ENCODE measurements at regions of chr1 and their contacts with region 1.

Region 1: DNA sequence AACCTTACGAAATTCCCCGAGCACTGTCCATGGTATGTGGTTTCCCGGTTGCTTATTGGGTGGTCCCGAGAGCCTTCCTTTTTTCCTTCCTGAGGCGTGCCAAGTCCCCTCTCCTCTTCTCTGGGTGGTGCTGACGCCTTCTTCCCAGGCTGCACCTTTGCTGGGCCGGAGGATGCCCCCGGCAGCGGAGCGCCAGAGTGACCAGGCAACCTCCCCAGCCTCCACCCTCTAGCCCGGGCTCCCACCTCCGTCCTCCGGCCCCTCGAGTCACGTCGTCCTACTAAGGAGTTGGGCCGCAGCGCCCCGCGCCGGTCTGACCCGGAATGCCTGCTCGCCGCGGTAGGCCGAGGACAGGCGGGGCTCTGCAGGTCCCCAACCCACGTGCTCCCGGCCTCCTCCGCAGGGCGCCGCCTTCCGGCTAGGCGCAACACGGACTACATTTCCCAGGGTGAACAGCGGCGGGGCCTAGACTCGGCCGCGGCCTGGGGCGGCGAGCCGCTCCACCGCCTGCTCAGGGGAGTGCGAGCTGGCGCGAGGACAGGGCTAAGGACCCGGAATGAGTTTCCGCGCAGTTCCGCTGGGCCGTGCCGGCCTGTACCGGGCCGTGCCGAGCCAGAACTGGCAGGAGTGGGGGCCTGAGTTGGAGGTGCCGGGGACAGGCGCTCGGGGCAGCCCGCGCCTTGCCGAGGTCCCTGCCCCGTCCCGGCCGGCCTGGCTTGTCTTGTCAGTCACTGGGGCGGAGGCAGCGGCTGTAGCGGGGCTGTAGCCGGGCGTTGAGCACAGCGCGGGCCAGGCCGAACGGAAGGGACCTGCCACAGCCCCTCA is at the start of gene IPO13:
- DNase-seq: peak; percentile 90 to 96 (median 94)
- H3K4me3 ChIP-seq: peak within 1 kb of the TSS; percentile 61 to 91 (median 66)
- H3K4me3 Mint-ChIP-seq: peak within 1 kb of the TSS; percentile 88 to 95
- H3K27ac ChIP-seq: peak within 1 kb of the TSS; percentile 30 to 98
- H3K27ac Mint-ChIP-seq: peak within 1 kb of the TSS; percentile 90 to 98 (median 97)
- H3K4me1 ChIP-seq: peaks cover 20 to 25% of the 10 kb centered on the region in 2 donors
- H3K4me1 Mint-ChIP-seq: peaks cover 49% of the 10 kb centered on the region
- H3K27me3 ChIP-seq: no peaks in the 10 kb centered on the region
- H3K27me3 Mint-ChIP-seq: no peaks in the 10 kb centered on the region
- CTCF ChIP-seq: peak; percentile 81
- polyA plus RNA-seq, gene IPO13: 10.1 to 20.4 (median 10.6) TPM

Region 2: DNA sequence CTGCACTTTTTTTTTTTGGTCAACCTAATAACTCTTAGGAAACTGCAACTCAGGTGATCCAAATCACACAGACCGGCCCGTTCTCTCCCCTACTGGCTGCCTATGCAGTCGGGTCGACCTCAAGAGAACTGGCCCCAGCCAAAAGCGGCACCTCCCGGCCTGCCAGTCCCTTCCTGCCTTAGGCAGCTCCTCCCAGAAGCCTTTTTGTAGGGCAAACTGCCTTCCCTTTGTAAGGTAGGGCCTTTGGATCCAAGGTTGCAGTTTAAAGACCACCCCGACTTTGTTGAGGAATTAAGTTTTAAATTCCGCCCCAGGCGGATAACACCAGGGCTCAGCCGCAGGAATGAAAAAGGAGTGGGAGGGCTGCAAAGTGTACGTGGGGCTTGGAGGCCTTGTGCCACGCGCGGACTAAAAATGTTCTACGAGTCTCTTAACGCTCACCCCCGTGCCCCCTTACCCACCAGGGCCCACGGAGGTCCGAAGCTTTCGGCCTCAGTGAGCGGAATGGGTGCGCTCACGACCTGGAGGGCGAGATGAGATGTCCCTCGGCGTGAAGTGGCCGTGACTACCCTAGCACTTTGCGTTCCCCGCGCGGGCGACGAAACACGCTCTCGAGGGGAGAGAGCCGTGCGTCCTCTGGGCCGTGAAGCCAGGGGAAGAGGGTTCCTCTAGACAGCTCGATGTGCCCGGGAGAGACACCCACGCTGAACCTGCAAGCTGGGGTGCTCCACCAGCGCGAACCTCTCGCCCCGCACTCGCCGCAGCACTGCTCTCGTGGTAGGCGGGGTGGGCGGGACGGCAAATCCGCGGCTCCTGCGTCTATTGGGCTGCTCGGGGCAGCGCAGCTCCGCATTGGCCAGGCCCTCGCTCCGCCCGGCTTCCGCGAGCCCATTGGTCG is 239.6 kb before region 1 on chr1:
- intact Hi-C with region 1: loop called in 1 of 2 experiments (anchors 5 kb)
- DNase-seq: peak; percentile 84 to 87 (median 87)
- H3K4me3 ChIP-seq: peak overlapping the region; percentile 38 to 89 (median 66)
- H3K4me3 Mint-ChIP-seq: peak overlapping the region; percentile 83 to 89
- H3K27ac ChIP-seq: peak overlapping the region in 1 of 2 donors; percentile 80
- H3K27ac Mint-ChIP-seq: peak overlapping the region; percentile 20 to 85 (median 70)
- H3K4me1 ChIP-seq: peaks cover 27 to 37% of the 10 kb centered on the region in 2 donors
- H3K4me1 Mint-ChIP-seq: peaks cover 44% of the 10 kb centered on the region
- H3K27me3 ChIP-seq: no peaks in the 10 kb centered on the region
- H3K27me3 Mint-ChIP-seq: no peaks in the 10 kb centered on the region
- CTCF ChIP-seq: no peak

Region 3: DNA sequence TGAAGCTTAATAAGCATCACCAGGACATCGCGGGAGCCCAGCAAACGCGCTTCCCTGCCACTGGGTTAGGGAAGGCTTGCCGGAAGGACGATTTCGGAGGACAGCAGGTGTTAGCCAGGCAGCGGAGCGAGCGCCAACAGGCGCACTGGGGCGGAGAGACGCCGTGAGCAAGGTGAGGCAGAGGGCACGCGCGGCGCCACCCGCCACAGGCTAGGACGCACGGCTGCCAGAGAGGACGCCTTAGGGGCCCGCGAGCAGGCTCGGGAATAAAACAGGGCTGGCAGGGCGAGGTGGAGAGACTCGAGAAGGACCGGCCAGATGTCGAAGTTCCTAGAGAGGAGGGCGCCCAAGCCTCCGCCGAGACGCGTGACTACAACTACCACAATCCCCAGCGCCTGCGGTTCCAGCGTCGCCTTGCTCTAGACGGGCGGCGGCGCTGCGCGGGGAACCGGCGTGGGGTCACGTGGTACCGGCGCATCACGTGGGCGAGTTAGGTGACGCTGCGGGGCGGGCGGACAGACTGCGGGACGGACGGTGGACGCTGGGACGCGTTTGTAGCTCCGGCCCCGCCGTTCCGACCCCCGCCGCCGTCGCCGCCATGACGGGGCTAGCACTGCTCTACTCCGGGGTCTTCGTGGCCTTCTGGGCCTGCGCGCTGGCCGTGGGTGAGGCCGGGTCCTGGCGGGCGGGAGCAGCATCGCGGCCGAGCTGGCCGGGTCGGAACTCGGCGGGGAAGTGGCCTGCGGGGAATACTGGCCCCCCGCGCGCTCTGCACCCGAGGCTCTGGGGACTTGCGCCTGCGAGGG is 28.2 kb after region 1 on chr1 and contains the start of gene ATP6V0B:
- intact Hi-C with region 1: loop called (anchors 1 to 2 kb)
- DNase-seq: peak; percentile 94 to 95 (median 94)
- H3K4me3 ChIP-seq: peak within 1 kb of the TSS; percentile 86 to 98 (median 97)
- H3K4me3 Mint-ChIP-seq: peak within 1 kb of the TSS; percentile 98 to 99
- H3K27ac ChIP-seq: peak within 1 kb of the TSS; percentile 97 to 99
- H3K27ac Mint-ChIP-seq: peak within 1 kb of the TSS; percentile 95 to 97 (median 96)
- H3K4me1 ChIP-seq: peaks cover 50 to 59% of the 10 kb centered on the region in 2 donors
- H3K4me1 Mint-ChIP-seq: peaks cover 53% of the 10 kb centered on the region
- H3K27me3 ChIP-seq: no peaks in the 10 kb centered on the region
- H3K27me3 Mint-ChIP-seq: peaks cover 2 to 8% (median 2%) of the 10 kb centered on the region in 3 donors
- CTCF ChIP-seq: peak; percentile 21
- polyA plus RNA-seq, gene ATP6V0B: 465 to 1,219 (median 954) TPM

Region 4: GRCh38 chr1:44002606-44003157 is 56.2 kb after region 1 on chr1:
- intact Hi-C with region 1: no loop called
- DNase-seq: no peak
- H3K4me3 ChIP-seq: no peak overlapping the region
- H3K4me3 Mint-ChIP-seq: no peak overlapping the region
- H3K27ac ChIP-seq: no peak overlapping the region
- H3K27ac Mint-ChIP-seq: no peak overlapping the region
- H3K4me1 ChIP-seq: no peaks in the 10 kb centered on the region
- H3K4me1 Mint-ChIP-seq: no peaks in the 10 kb centered on the region
- H3K27me3 ChIP-seq: no peaks in the 10 kb centered on the region
- H3K27me3 Mint-ChIP-seq: peaks cover 3 to 8% (median 6%) of the 10 kb centered on the region in 3 donors
- CTCF ChIP-seq: peak; percentile 24

Measured in CD14-positive monocyte (primary cell).